Tibial artery (tissue), 4 donors: ENCODE measurements at regions of chr6 and their contacts with region 1.

Region 1: GRCh38 chr6:42661540-42662153 is 60.8 kb downstream of the PRPH2 start:
- DNase-seq: peak; percentile 78 to 85
- H3K4me3 ChIP-seq: no peak overlapping the region
- H3K27ac ChIP-seq: no peak overlapping the region
- H3K4me1 ChIP-seq: peaks cover 0 to 3% (median 0%) of the 10 kb centered on the region in 4 donors
- H3K27me3 ChIP-seq: no peaks in the 10 kb centered on the region
- CTCF ChIP-seq: peak; percentile 82 to 90

Region 2: DNA sequence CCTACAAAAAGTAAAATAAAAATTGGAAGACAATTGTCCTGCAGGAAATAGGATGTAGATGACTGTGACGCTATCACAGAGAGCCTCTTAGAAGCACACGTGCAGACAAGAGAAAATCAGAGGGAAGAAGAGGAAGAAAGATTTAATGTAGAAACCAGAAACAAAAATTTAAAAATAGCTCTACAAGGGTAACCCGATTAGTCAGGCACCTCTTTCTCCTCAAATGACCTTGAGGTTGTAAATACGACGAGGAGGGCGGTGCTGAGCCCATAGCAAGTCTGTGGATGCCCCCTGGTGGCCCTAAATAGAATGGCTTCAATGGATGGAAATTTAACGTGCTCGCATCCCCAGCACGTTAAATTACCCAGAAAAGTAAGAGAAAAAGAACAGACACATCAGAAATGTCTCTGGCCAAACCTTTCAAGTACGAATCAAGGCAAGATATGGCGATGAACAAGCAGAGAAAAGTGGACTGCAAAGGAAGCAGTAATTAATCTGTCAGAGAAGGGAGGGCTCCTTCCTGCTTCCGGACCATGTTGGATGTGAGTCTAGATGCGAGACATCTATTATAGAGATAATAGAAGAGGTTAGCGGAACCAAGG is 64.9 kb after region 1 on chr6:
- intact Hi-C with region 1: loop called (anchors 5 kb)
- DNase-seq: peak; percentile 79 to 85
- H3K4me3 ChIP-seq: peak overlapping the region; percentile 52 to 71
- H3K27ac ChIP-seq: peak overlapping the region; percentile 67 to 76
- H3K4me1 ChIP-seq: peaks cover 0 to 15% (median 5%) of the 10 kb centered on the region in 4 donors
- H3K27me3 ChIP-seq: no peaks in the 10 kb centered on the region
- CTCF ChIP-seq: peak; percentile 83 to 91